Heart right ventricle (tissue), 16 donors: ENCODE measurements at regions of chr6 and their contacts with region 1.

Region 1: DNA sequence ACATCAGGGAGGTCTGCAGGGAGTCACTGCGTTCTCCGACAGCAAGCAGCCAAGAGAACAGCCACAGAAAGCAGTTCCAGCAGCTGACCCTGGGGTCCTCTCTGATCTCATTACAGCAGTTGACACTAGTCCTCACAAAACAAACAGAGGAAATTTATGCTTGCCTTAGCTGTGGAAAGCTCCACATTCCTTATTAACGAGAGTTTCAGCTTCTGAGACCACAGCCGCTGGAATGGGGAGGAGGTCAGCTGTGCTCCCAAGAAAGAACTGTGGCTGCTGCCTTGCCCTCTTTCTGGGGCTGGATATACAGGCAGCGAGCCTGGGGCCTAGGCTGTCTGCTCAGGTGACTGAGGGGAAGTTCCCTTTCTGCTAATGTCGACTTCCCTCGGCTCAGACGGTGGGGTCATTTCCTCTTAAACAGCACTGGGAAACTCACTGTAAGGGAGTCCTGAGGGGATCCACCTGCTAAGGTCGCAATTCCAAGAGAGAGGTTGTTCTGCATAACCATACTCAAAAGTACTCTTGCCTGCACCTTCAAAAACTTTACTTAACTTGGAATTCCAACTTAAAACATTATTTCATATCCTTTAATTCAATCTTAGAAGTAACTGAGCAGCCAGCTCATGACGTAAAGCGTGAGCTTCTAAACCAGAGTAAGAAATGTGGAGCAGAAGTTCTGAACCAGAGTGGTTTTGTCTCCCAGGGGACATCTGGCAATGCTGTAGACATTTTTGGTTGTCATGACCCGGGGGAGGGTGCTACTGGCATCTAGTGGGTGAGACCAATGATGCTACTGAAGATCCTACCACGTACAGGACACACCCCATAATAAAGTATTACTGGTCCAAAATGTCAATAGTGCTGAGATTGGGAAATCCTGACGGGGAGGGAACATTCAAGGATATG is 80.3 kb downstream of the BACH2 start:
- DNase-seq: no peak
- ATAC-seq: no peak
- H3K4me3 ChIP-seq: no peak overlapping the region
- H3K27ac ChIP-seq: peak overlapping the region in 6 of 10 donors; percentile 33 to 96 (median 49)
- H3K4me1 ChIP-seq: peaks cover 6 to 54% (median 34%) of the 10 kb centered on the region in 9 donors
- H3K27me3 ChIP-seq: no peaks in the 10 kb centered on the region
- CTCF ChIP-seq: no peak

Region 2: DNA sequence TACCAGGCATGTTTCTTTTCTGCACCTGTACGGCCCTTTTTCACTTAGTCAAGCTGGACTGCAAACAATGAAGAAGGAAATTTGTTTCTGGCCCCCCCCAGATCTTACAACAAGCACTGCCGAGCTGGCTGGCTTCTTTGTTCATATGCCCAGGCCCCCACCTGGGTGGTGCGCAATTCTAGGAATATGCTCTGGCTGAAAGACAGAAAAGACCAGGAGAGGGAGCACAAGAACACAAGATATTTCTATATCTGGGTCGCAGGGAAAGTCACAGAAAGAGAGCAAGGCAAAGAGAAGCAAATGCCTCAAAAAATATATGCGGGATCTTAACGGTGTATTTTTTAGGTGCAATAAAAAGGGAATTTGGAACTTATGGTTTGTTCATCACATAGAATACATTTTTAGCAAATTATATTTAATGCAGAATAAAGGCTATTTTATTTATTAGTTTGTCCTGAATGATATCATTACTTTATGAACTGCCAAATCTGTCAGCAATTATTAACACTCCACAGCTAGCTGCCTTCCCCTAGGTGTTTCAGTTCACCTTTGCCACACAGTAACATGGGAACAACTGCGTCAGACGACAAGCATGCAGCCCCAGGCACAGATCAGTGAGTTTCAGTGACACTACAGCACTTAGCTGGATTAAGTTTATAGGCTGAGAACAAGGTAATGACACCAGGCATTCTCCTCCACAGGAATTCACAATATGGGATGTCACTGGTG is 245.6 kb before region 1 on chr6:
- intact Hi-C with region 1: loop called in 3 of 10 experiments (anchors 5 to 10 kb)
- DNase-seq: peak; percentile 18 to 48
- ATAC-seq: peak; percentile 24 to 90 (median 79)
- H3K4me3 ChIP-seq: no peak overlapping the region
- H3K27ac ChIP-seq: no peak overlapping the region
- H3K4me1 ChIP-seq: peaks cover 7 to 31% (median 21%) of the 10 kb centered on the region in 9 donors
- H3K27me3 ChIP-seq: no peaks in the 10 kb centered on the region
- CTCF ChIP-seq: peak in 8 of 9 donors; percentile 20 to 80 (median 68)

Region 3: GRCh38 chr6:89984926-89985750 is 231.2 kb before region 1 on chr6:
- intact Hi-C with region 1: loop called in 1 of 10 experiments (anchors 10 kb)
- DNase-seq: peak; percentile 77 to 93
- ATAC-seq: peak; percentile 90 to 96 (median 95)
- H3K4me3 ChIP-seq: peak overlapping the region in 1 of 10 donors; percentile 3
- H3K27ac ChIP-seq: peak overlapping the region in 9 of 10 donors; percentile 41 to 84 (median 66)
- H3K4me1 ChIP-seq: peaks cover 9 to 38% (median 24%) of the 10 kb centered on the region in 9 donors
- H3K27me3 ChIP-seq: no peaks in the 10 kb centered on the region
- CTCF ChIP-seq: no peak

Region 4: GRCh38 chr6:90179190-90180169 is 36.8 kb before region 1 on chr6:
- intact Hi-C with region 1: loop called in 2 of 10 experiments (anchors 5 kb)
- DNase-seq: no peak
- ATAC-seq: no peak
- H3K4me3 ChIP-seq: no peak overlapping the region
- H3K27ac ChIP-seq: no peak overlapping the region
- H3K4me1 ChIP-seq: peaks cover 0 to 49% (median 37%) of the 10 kb centered on the region in 9 donors
- H3K27me3 ChIP-seq: no peaks in the 10 kb centered on the region
- CTCF ChIP-seq: peak in 8 of 9 donors; percentile 11 to 53 (median 38)

Region 5: DNA sequence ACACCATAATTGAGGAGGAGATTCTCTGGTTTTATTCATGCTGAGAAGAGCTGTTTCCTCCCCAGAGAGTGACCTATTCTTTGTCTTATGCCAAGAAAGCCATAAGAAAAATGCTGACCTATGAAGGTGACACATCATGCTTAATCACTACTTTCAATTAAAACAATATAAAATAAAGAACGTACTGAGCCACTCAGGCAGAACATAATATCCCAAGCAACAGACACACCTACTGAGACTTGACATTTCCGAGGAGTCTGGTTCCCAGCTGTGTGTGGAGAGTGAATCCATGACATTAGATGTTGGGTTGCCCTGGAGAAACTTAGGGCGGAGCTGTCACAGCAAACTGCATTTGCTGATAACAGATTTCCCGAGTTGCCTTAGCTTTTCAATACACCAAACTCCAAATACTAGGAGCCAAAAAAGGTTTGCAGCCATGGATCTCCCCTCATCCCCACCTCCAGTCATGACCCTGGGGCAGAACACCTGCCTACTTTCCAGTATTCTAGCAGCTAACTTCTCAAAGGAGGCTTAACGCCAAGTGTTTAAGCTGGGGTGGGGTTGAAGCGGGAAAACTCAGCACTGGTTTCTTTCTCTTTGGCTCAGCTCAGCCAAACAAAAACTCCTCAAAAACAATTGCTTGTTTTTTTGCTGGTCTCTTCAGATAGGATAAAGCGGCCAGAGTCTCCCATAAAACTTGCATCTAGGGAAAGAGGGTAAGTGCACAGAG is 11.8 kb before region 1 on chr6:
- intact Hi-C with region 1: no loop called
- DNase-seq: no peak
- ATAC-seq: peak in 5 of 8 donors; percentile 26 to 79 (median 53)
- H3K4me3 ChIP-seq: no peak overlapping the region
- H3K27ac ChIP-seq: no peak overlapping the region
- H3K4me1 ChIP-seq: peaks cover 0 to 15% (median 0%) of the 10 kb centered on the region in 9 donors
- H3K27me3 ChIP-seq: no peaks in the 10 kb centered on the region
- CTCF ChIP-seq: no peak

Region 6: GRCh38 chr6:90241229-90241880 is 25.0 kb after region 1 on chr6:
- intact Hi-C with region 1: no loop called
- DNase-seq: peak in 1 of 2 donors; percentile 30
- ATAC-seq: peak; percentile 34 to 78 (median 62)
- H3K4me3 ChIP-seq: no peak overlapping the region
- H3K27ac ChIP-seq: peak overlapping the region in 1 of 10 donors; percentile 6
- H3K4me1 ChIP-seq: peaks cover 0 to 30% (median 15%) of the 10 kb centered on the region in 9 donors
- H3K27me3 ChIP-seq: no peaks in the 10 kb centered on the region
- CTCF ChIP-seq: no peak

Region 7: GRCh38 chr6:90296346-90297114 is 80.2 kb after region 1 on chr6 and contains the start of gene BACH2:
- intact Hi-C with region 1: loop called in 6 of 10 experiments (anchors 2 to 10 kb)
- DNase-seq: peak; percentile 87 to 91
- ATAC-seq: peak; percentile 64 to 87 (median 75)
- H3K4me3 ChIP-seq: peak within 1 kb of the TSS; percentile 48 to 93 (median 80)
- H3K27ac ChIP-seq: peak within 1 kb of the TSS; percentile 74 to 92 (median 82)
- H3K4me1 ChIP-seq: peaks cover 0 to 29% (median 14%) of the 10 kb centered on the region in 9 donors
- H3K27me3 ChIP-seq: peaks cover 0 to 53% (median 0%) of the 10 kb centered on the region in 7 donors
- CTCF ChIP-seq: peak in 4 of 9 donors; percentile 19 to 38 (median 27)
- total RNA-seq, gene BACH2: 1.5 to 4.7 (median 2.8) TPM